ENCODE measurements at regions of chr19 and their contacts with region 1.

Region 1: DNA sequence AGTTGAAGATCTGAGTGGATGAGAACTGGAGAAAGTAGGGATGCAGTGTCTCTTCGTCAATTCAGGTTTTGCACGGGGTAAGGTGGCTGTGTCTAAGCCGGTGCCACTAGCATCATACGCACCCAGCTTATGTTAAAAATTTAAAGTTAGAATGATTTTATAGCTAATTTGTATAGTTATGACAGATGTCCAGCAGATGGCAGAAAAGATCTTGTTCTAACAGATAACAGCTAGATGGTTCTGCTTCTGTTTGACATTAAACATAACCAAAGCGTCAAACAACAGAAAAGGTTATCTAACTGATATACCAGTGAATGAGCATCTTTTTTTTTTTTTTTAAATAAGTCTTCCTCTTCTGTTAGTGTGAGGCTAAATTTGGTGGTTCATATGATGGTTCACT is 18.8 kb upstream of the EDDM13 start:
- DNase-seq: peak; percentile 69
- H3K4me3 ChIP-seq: no peak overlapping the region
- H3K27ac ChIP-seq: no peak overlapping the region
- H3K4me1 ChIP-seq: no peaks in the 10 kb centered on the region
- CTCF ChIP-seq: peak; percentile 74

Region 2: GRCh38 chr19:56058307-56058706 is 195.4 kb before region 1 on chr19:
- CTCF ChIA-PET with region 1: no interaction called
- POLR2A ChIA-PET with region 1: no interaction called
- intact Hi-C with region 1: no loop called
- DNase-seq: no peak
- H3K4me3 ChIP-seq: no peak overlapping the region
- H3K27ac ChIP-seq: no peak overlapping the region
- H3K4me1 ChIP-seq: no peaks in the 10 kb centered on the region
- CTCF ChIP-seq: no peak

Region 3: DNA sequence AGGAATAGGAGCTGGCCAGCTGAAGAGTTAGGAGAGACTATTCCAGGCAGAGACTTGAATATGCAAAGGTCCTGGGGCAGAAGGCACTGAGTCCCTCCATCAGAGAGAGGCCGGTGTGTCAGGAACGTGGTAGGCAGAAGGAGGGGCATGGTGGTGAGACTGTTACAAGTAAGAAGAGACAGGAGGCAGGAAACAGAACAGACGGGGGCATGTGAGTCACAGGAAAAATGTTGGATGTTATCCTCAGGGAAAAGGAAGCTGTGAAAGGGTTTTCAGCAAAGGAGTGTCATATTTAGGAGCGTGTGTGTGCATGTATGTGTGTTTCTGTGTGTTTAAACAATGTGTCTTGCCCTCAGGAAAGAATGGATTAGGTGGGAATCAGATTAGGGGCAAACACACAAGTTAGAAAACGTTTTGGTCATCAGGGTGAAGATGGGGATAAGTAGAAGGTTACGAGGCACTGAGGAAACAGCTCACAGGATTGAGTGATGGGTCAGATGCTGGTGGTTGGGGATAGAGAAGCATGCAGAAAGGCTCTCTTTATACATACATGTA is 19.9 kb after region 1 on chr19:
- CTCF ChIA-PET with region 1: no interaction called
- POLR2A ChIA-PET with region 1: no interaction called
- intact Hi-C with region 1: no loop called
- DNase-seq: no peak
- H3K4me3 ChIP-seq: no peak overlapping the region
- H3K27ac ChIP-seq: no peak overlapping the region
- H3K4me1 ChIP-seq: no peaks in the 10 kb centered on the region
- CTCF ChIP-seq: no peak

Region 4: GRCh38 chr19:56333505-56333904 is 79.8 kb after region 1 on chr19:
- CTCF ChIA-PET with region 1: interaction called, 5 read pairs
- POLR2A ChIA-PET with region 1: interaction called, 3 read pairs
- intact Hi-C with region 1: loop called (anchors 1 kb)
- DNase-seq: peak; percentile 61
- H3K4me3 ChIP-seq: no peak overlapping the region
- H3K27ac ChIP-seq: no peak overlapping the region
- H3K4me1 ChIP-seq: no peaks in the 10 kb centered on the region
- CTCF ChIP-seq: peak; percentile 96